ENCODE measurements at regions of chr9 and their contacts with region 1.

Region 1: DNA sequence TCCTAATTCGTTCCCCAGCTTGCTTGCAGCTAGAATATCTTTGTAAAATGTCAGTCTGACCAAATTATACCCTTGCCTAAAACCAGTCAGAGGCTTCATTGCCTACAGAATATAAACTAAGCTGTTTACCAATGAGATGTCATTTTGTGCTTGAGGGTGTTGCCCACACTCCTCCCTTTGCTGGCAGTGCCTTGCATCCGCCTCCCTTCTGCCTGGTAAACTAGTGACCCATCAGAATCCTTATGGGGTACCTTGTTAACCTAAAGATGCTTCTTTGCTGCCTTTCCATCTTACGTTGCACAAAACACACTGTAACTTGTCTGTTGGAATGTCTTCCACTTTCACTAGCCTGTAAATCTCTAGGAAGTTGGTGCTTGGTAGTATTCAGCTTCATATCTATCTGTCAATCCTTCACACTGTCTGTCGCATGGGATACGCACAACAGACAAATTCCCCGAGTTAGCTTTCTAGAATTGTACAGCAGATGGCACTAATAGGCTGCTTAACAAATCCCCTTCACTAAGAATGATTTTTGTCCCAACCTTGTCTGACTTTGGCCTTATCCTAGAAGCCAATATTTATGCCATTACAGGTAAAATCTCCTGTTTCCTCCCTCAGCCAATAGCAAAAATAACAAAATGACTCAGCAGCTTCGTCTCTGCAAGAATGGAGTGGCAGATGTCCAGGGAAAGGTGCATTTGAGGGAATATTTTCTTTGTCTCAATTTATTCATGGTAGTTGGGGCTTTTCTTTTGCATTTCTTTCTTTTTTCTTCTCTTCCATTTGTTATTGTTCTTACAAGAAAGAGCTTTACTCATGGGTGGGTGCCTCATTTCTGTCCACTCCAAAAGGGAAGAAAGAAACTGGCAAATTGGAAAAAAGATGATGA is 3.0 kb downstream of the NUDT2 start:
- DNase-seq: peak in 1 of 4 donors; percentile 40
- ATAC-seq: no peak
- H3K4me3 ChIP-seq: no peak overlapping the region
- H3K27ac ChIP-seq: no peak overlapping the region
- H3K4me1 ChIP-seq: peaks cover 5 to 22% of the 10 kb centered on the region in 2 donors
- H3K27me3 ChIP-seq: no peaks in the 10 kb centered on the region
- CTCF ChIP-seq: peak in 1 of 2 donors; percentile 32

Region 2: DNA sequence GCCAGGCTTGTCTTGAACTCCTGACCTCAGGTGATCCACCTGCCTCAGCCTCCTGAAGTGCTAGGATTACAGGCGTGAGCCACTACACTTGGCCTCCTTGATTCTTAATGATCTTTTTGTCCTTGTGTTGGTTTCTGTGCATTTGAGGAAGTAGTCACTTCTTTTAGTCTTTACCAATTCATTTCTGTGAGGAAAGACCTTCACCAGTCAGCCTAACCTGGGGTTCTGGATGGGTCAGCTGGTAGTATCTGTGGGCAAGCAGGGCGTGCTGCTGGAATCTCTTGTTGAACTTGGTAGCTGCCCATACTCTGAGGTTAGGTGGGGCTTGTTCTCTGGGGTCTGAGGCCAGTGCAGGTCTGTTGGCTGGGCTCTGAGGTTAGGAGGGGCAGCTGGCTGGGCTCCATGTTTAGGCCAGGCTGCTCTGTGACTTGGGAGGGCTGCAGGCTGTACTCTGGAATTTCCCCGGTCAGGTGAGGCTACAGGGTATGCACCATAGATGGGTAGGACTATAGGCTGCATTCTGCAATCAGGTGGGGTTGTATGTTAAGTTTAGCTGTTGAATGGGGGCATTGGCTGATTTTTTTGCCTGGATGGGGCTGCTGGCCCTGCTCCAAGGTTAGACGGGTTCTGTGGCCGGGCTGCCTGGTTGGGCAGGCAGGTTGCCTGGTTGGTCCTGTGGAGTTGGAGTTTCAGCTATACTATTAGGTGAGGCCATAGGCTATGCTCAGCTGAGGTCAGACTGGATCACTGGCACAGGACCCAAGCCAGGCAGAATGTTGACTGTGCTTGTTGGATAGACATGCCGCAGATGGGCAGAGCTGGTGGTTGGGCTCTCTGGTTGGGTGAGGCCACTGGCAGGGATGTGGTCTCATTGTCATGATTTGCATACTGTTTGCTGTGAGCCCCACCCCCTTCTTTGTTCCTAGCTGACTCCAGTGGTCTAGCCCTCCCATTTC is 134.3 kb before region 1 on chr9:
- intact Hi-C with region 1: no loop called
- DNase-seq: no peak
- ATAC-seq: peak; percentile 35
- H3K4me3 ChIP-seq: no peak overlapping the region
- H3K27ac ChIP-seq: peak overlapping the region in 1 of 2 donors; percentile 28
- H3K4me1 ChIP-seq: peaks cover 0 to 23% of the 10 kb centered on the region in 2 donors
- H3K27me3 ChIP-seq: no peaks in the 10 kb centered on the region
- CTCF ChIP-seq: no peak

Region 3: GRCh38 chr9:34379334-34380033 is 47.2 kb after region 1 on chr9:
- intact Hi-C with region 1: loop called in 1 of 2 experiments (anchors 2 kb)
- DNase-seq: peak; percentile 53 to 94 (median 86)
- ATAC-seq: peak; percentile 62
- H3K4me3 ChIP-seq: peak overlapping the region; percentile 12 to 53
- H3K27ac ChIP-seq: no peak overlapping the region
- H3K4me1 ChIP-seq: peaks cover 13 to 51% of the 10 kb centered on the region in 2 donors
- H3K27me3 ChIP-seq: peaks cover 0 to 14% of the 10 kb centered on the region in 2 donors
- CTCF ChIP-seq: peak; percentile 94 to 98

Region 4: GRCh38 chr9:34603610-34604231 is 271.4 kb after region 1 on chr9:
- intact Hi-C with region 1: loop called in 1 of 2 experiments (anchors 10 kb)
- DNase-seq: peak; percentile 70 to 88 (median 78)
- ATAC-seq: peak; percentile 96
- H3K4me3 ChIP-seq: no peak overlapping the region
- H3K27ac ChIP-seq: no peak overlapping the region
- H3K4me1 ChIP-seq: no peaks in the 10 kb centered on the region
- H3K27me3 ChIP-seq: no peaks in the 10 kb centered on the region
- CTCF ChIP-seq: peak; percentile 91 to 92